K562 (cell line): ENCODE measurements at regions of chr15 and their contacts with region 1.

Region 1: GRCh38 chr15:63048115-63048775 is 5.7 kb downstream of the TPM1 start:
- DNase-seq: peak; percentile 92 to 97 (median 96)
- ATAC-seq: peak; percentile 93
- H3K4me3 ChIP-seq: peak overlapping the region; percentile 82
- H3K27ac ChIP-seq: peak overlapping the region; percentile 88
- H3K4me1 ChIP-seq: peaks cover 28 to 40% of the 10 kb centered on the region in 2 experiments
- H3K27me3 ChIP-seq: peaks cover 17 to 28% of the 10 kb centered on the region in 2 experiments
- CTCF ChIP-seq: peak; percentile 84 to 94 (median 89)
- EP300 ChIP-seq: no peak
- POLR2A ChIP-seq: peak; percentile 57; the same call in 1 of the 2 replicates
- RAD21 ChIP-seq: peak; percentile 95 to 96

Region 2: GRCh38 chr15:62847900-62848489 is 200.2 kb before region 1 on chr15:
- CTCF ChIA-PET with region 1: no interaction called
- POLR2A ChIA-PET with region 1: no interaction called
- in situ Hi-C with region 1: no loop called
- intact Hi-C with region 1: loop called (anchors 5 kb)
- DNase-seq: peak; percentile 67 to 76 (median 70)
- ATAC-seq: peak; percentile 93
- H3K4me3 ChIP-seq: no peak overlapping the region
- H3K27ac ChIP-seq: no peak overlapping the region
- H3K4me1 ChIP-seq: no peaks in the 10 kb centered on the region
- H3K27me3 ChIP-seq: peaks cover 18 to 51% of the 10 kb centered on the region in 2 experiments; a peak in 4 of 5 replicates
- CTCF ChIP-seq: peak; percentile 67 to 86 (median 76)
- EP300 ChIP-seq: no peak
- POLR2A ChIP-seq: no peak
- RAD21 ChIP-seq: peak; percentile 55 to 74

Region 3: DNA sequence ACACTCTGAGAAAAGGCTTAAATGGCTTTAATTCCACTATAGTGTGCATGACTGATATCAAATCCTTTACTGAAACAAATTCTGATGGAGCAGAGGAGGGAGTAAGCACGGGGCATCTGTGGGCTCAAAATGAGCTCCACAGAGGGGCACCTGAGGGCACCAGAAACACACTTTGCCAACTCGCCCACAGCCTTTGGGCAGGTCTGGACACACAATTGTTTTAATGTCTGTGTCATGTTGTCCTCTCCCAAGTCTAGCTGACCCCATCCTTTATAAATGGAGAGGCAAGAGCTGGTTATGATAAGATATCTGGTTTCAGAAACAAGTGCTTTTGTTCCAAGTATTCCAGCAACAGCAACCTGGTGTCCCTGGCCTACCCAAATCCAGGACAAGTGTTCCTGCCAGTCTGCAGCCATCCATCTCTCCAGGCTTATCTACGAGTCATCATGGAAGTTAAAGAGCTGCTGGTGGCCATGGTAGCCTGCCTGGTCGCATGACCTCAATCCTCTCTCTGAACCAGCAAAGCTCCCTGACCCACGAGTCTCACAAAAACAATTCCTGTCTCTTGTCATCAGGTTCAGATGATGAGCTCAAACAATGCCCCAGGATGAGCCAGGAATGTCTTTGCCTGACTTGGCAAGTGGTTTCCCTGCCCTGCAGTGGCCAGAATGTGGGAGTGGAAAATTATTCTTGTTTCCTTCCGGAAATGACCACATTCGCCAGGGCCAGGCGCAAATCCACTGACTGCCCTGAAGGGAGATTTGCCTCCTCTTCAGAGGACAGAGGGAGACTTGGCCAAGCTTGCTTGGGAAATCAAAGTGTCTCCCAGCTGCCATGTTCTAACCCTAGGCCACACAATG is 70.1 kb before region 1 on chr15:
- CTCF ChIA-PET with region 1: no interaction called
- POLR2A ChIA-PET with region 1: no interaction called
- in situ Hi-C with region 1: no loop called
- intact Hi-C with region 1: no loop called
- DNase-seq: no peak
- ATAC-seq: no peak
- H3K4me3 ChIP-seq: no peak overlapping the region
- H3K27ac ChIP-seq: no peak overlapping the region
- H3K4me1 ChIP-seq: no peaks in the 10 kb centered on the region
- H3K27me3 ChIP-seq: peaks cover 15 to 20% of the 10 kb centered on the region in 2 experiments
- CTCF ChIP-seq: no peak
- EP300 ChIP-seq: no peak
- POLR2A ChIP-seq: no peak
- RAD21 ChIP-seq: no peak

Region 4: GRCh38 chr15:63079938-63080626 is 31.8 kb after region 1 on chr15:
- CTCF ChIA-PET with region 1: no interaction called
- POLR2A ChIA-PET with region 1: interaction called, 3 read pairs
- in situ Hi-C with region 1: loop called (anchors 5 kb)
- intact Hi-C with region 1: no loop called
- DNase-seq: no peak
- ATAC-seq: no peak
- H3K4me3 ChIP-seq: no peak overlapping the region
- H3K27ac ChIP-seq: no peak overlapping the region
- H3K4me1 ChIP-seq: peaks cover 11 to 32% of the 10 kb centered on the region in 2 experiments; a peak in 3 of 5 replicates
- H3K27me3 ChIP-seq: no peaks in the 10 kb centered on the region
- CTCF ChIP-seq: no peak
- EP300 ChIP-seq: no peak
- POLR2A ChIP-seq: no peak
- RAD21 ChIP-seq: no peak

Region 5: GRCh38 chr15:63093486-63094205 is 45.4 kb after region 1 on chr15:
- CTCF ChIA-PET with region 1: interaction called, 56 read pairs
- POLR2A ChIA-PET with region 1: interaction called, 6 read pairs
- in situ Hi-C with region 1: no loop called
- intact Hi-C with region 1: loop called (anchors 1 kb)
- DNase-seq: peak; percentile 74 to 87 (median 78)
- ATAC-seq: peak; percentile 99
- H3K4me3 ChIP-seq: no peak overlapping the region
- H3K27ac ChIP-seq: no peak overlapping the region
- H3K4me1 ChIP-seq: peaks cover 2 to 5% of the 10 kb centered on the region in 2 experiments; a peak in 1 of 5 replicates
- H3K27me3 ChIP-seq: 0 out of 5 replicates have a peak, but pooled peaks cover 0 to 3% of the 10 kb centered on the region in 2 experiments
- CTCF ChIP-seq: peak; percentile 92 to 95 (median 92)
- EP300 ChIP-seq: no peak
- POLR2A ChIP-seq: no peak
- RAD21 ChIP-seq: peak; percentile 98 to 100

Region 6: GRCh38 chr15:63288778-63289378 is 240.6 kb after region 1 on chr15:
- CTCF ChIA-PET with region 1: no interaction called
- POLR2A ChIA-PET with region 1: no interaction called
- in situ Hi-C with region 1: no loop called
- intact Hi-C with region 1: loop called (anchors 5 kb)
- DNase-seq: peak; percentile 29 to 69 (median 53)
- ATAC-seq: peak; percentile 77
- H3K4me3 ChIP-seq: no peak overlapping the region
- H3K27ac ChIP-seq: no peak overlapping the region
- H3K4me1 ChIP-seq: peaks cover 4 to 16% of the 10 kb centered on the region in 2 experiments; a peak in 4 of 5 replicates
- H3K27me3 ChIP-seq: no peaks in the 10 kb centered on the region
- CTCF ChIP-seq: peak; percentile 53 to 94 (median 68); a peak in 5 of 6 replicates
- EP300 ChIP-seq: no peak
- POLR2A ChIP-seq: no peak
- RAD21 ChIP-seq: peak; percentile 98

Region 7: GRCh38 chr15:63402498-63403253 is 354.4 kb after region 1 on chr15:
- CTCF ChIA-PET with region 1: no interaction called
- POLR2A ChIA-PET with region 1: interaction called, 3 read pairs
- in situ Hi-C with region 1: no loop called
- intact Hi-C with region 1: loop called (anchors 5 kb)
- DNase-seq: peak in 3 of 4 experiments; percentile 20 to 57 (median 54)
- ATAC-seq: peak; percentile 79
- H3K4me3 ChIP-seq: no peak overlapping the region
- H3K27ac ChIP-seq: no peak overlapping the region
- H3K4me1 ChIP-seq: peaks cover 0 to 12% of the 10 kb centered on the region in 2 experiments; a peak in 3 of 5 replicates
- H3K27me3 ChIP-seq: no peaks in the 10 kb centered on the region
- CTCF ChIP-seq: peak; percentile 53 to 85 (median 58); a peak in 3 of 6 replicates
- EP300 ChIP-seq: no peak
- POLR2A ChIP-seq: no peak
- RAD21 ChIP-seq: peak; percentile 96 to 97